ENCODE measurements at regions of chr18 and their contacts with region 1.

Region 1: GRCh38 chr18:23412351-23412964 is 40.6 kb upstream of the RIOK3 start:
- DNase-seq: no peak
- H3K4me3 Mint-ChIP-seq: no peak overlapping the region
- H3K27ac Mint-ChIP-seq: no peak overlapping the region
- H3K4me1 Mint-ChIP-seq: no peaks in the 10 kb centered on the region
- H3K27me3 Mint-ChIP-seq: no peaks in the 10 kb centered on the region

Region 2: DNA sequence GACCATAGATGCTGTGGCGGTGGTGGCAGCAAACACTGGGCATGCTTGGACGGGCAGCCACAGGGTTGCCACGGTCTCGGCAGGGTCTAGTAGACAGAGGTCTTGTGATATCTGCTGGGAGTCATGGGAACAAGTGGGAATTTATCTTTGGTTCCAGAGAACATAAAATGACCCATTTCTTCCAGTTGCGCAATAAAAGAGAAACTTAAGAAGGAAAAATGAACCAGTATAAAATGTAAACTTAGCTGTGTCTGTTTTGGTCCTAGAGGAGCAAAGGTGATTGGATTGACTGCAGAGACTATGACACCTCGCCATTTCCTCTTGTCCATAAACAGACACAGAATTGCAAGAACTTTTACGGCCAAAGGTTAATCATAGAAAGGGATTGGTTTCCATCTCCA is 611.9 kb before region 1 on chr18:
- CTCF ChIA-PET with region 1: interaction called, 8 read pairs
- POLR2A ChIA-PET with region 1: no interaction called
- intact Hi-C with region 1: loop called (anchors 2 kb)
- DNase-seq: no peak
- H3K4me3 Mint-ChIP-seq: no peak overlapping the region
- H3K27ac Mint-ChIP-seq: no peak overlapping the region
- H3K4me1 Mint-ChIP-seq: no peaks in the 10 kb centered on the region
- H3K27me3 Mint-ChIP-seq: peaks cover 4% of the 10 kb centered on the region

Region 3: GRCh38 chr18:23131693-23132319 is 280.7 kb before region 1 on chr18:
- CTCF ChIA-PET with region 1: interaction called, 126 read pairs
- POLR2A ChIA-PET with region 1: interaction called, 3 read pairs
- intact Hi-C with region 1: loop called (anchors 1 kb)
- DNase-seq: peak; percentile 55
- H3K4me3 Mint-ChIP-seq: peak overlapping the region; percentile 8
- H3K27ac Mint-ChIP-seq: no peak overlapping the region
- H3K4me1 Mint-ChIP-seq: peaks cover 14% of the 10 kb centered on the region
- H3K27me3 Mint-ChIP-seq: peaks cover 25% of the 10 kb centered on the region

Region 4: GRCh38 chr18:23356915-23357601 is 55.4 kb before region 1 on chr18:
- CTCF ChIA-PET with region 1: interaction called, 3 read pairs
- POLR2A ChIA-PET with region 1: no interaction called
- intact Hi-C with region 1: loop called (anchors 5 kb)
- DNase-seq: no peak
- H3K4me3 Mint-ChIP-seq: no peak overlapping the region
- H3K27ac Mint-ChIP-seq: no peak overlapping the region
- H3K4me1 Mint-ChIP-seq: peaks cover 10% of the 10 kb centered on the region
- H3K27me3 Mint-ChIP-seq: no peaks in the 10 kb centered on the region

Region 5: DNA sequence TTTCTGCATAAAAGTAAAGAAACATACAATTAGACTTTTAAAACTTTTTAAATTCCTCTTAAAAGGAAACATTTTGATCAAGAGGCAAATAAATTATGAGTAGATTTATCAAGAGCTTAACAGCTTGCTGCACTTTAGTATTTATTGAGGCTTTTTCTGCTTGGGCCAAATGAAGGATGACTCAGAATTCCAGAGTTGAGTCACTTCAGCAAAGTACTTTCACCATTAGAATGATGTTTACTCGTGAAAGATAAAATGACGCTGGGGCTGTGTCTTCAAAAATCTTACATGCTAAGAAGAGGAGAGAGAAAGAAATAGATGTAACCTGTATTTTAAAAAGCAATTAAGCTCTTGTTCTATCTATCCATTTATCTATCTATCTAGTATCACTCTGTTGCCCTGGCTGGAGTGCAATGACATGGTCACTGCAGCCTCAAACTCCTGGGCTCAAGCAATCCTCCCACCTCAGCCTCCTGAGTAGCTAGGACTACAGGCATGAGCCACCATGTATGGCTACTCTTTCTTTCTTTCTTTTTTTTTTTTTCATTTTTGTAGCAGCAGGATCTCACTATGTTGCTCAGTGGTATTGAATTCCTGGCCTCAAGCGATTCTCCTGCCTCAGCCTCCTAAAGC is 34.7 kb before region 1 on chr18:
- CTCF ChIA-PET with region 1: interaction called, 13 read pairs
- POLR2A ChIA-PET with region 1: no interaction called
- intact Hi-C with region 1: no loop called
- DNase-seq: no peak
- H3K4me3 Mint-ChIP-seq: no peak overlapping the region
- H3K27ac Mint-ChIP-seq: peak overlapping the region; percentile 28
- H3K4me1 Mint-ChIP-seq: peaks cover 13% of the 10 kb centered on the region
- H3K27me3 Mint-ChIP-seq: no peaks in the 10 kb centered on the region

Region 6: GRCh38 chr18:23398401-23398800 is 14.1 kb before region 1 on chr18:
- CTCF ChIA-PET with region 1: interaction called, 11 read pairs
- POLR2A ChIA-PET with region 1: no interaction called
- intact Hi-C with region 1: no loop called
- DNase-seq: no peak
- H3K4me3 Mint-ChIP-seq: no peak overlapping the region
- H3K27ac Mint-ChIP-seq: no peak overlapping the region
- H3K4me1 Mint-ChIP-seq: peaks cover 6% of the 10 kb centered on the region
- H3K27me3 Mint-ChIP-seq: no peaks in the 10 kb centered on the region

Measured in activated CD4-positive, alpha-beta memory T cell treated with anti-CD3 and anti-CD28 coated beads for 36 hours (primary cell).